Activated CD4-positive, alpha-beta T cell treated with anti-CD3 and anti-CD28 coated beads for 36 hours (primary cell): ENCODE measurements at regions of chr13 and their contacts with region 1.

Region 1: DNA sequence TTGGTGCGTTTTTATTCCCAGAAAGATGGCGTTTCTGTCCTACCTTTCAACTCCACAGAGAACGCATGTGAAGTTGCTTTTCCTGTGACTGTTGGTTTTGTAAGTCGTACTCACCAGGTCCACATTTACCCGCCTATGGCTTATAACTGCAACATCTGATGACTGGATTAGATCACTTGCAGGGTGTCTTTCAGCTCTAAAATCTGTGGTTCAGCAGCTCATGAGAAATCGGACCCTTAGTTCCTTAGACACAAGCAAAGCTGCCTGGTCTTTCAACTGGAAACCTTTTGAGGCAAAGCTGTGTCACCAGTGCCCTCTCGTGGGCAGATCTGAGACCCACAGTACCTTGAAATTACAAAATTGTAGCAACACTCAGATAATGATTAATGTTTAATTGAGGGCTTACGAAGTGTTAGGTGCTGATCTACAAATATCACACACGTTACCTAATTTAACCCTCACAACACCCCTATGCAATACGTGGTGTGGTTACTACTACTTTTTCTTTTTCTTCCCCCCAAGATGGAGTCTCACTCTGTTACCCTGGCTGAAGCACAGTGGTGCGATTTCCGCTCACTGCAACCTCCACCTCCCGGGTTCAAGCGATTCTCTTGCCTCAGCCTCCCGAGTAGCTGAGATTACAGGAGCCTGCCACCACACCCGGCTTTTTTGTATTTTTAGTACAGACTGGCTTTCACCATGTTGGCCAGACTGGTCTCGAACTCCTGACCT is 65.4 kb downstream of the RUBCNL start:
- DNase-seq: peak; percentile 87
- ATAC-seq: peak; percentile 87
- H3K4me3 Mint-ChIP-seq: peak overlapping the region; percentile 77
- H3K27ac Mint-ChIP-seq: peak overlapping the region; percentile 94
- H3K4me1 Mint-ChIP-seq: peaks cover 37% of the 10 kb centered on the region
- H3K27me3 Mint-ChIP-seq: no peaks in the 10 kb centered on the region

Region 2: DNA sequence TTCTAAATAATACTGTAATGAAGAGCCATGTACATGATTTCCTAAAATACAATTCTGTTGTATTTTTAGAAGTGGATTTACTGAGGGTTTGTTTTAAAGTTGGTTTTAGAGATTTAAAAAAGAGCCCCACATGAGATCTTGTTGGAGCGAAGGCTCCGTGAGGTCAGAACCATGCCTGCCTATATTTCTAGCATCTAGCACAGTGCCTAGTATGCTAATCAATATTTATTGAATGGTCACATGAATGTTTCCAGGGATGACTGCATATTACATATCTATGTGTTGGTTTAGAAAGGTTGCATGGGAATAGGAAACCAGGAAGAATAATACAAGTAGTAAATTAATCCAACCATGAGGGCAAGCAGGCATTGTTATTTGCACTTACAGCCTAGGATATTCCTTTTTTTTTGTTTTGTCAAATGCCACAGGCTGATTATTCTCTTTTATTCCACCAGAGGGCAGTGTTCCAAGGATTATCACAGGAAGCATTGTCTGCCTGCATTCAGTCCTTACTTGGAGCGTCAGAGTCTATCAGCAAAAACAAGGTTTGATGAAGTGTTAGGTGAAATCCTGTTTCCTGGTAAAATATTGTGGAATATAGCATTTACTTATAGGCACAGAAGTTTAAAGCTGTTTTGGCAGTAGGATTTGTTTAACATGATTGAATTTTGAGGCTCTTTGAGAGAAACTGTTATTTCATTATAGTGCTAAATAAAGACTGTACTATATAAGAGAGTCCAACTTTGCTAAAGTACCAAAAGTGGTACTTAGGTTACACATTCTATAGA is 810.2 kb before region 1 on chr13:
- CTCF ChIA-PET with region 1: interaction called, 3 read pairs
- POLR2A ChIA-PET with region 1: no interaction called
- intact Hi-C with region 1: loop called (anchors 1 to 2 kb)
- DNase-seq: peak; percentile 25
- ATAC-seq: peak; percentile 89
- H3K4me3 Mint-ChIP-seq: no peak overlapping the region
- H3K27ac Mint-ChIP-seq: peak overlapping the region; percentile 66
- H3K4me1 Mint-ChIP-seq: peaks cover 14% of the 10 kb centered on the region
- H3K27me3 Mint-ChIP-seq: no peaks in the 10 kb centered on the region

Region 3: DNA sequence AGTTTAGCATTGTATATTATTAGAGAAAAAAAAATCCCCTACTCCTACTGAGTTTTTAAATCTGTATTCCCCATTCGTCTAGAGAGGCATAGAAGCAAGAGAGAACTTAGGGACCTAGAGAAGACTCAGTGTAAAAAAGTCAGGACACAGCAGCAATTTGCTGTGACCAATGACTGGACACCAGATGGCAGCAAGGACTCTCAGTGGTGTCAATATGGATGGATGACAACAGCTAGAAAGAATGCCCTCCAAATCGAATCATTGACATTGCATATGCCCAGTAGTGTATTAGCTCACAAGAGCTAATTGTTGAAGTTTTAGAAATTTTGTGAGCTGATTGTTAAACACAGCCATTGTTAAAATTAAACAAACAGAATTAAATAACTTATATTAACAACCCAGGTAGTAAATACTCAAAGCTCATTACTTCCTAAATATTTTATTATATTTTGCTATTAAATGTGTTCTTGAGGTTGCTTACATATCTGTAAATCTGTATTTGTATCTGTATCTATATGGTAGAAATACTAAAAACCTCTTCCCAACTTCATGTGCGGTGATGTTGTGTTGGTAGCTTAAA is 514.0 kb before region 1 on chr13:
- CTCF ChIA-PET with region 1: no interaction called
- POLR2A ChIA-PET with region 1: no interaction called
- intact Hi-C with region 1: loop called in 1 of 2 experiments (anchors 1 kb)
- DNase-seq: peak; percentile 43
- ATAC-seq: no peak
- H3K4me3 Mint-ChIP-seq: no peak overlapping the region
- H3K27ac Mint-ChIP-seq: no peak overlapping the region
- H3K4me1 Mint-ChIP-seq: peaks cover 4% of the 10 kb centered on the region
- H3K27me3 Mint-ChIP-seq: no peaks in the 10 kb centered on the region

Region 4: GRCh38 chr13:46160471-46161066 is 161.1 kb before region 1 on chr13:
- CTCF ChIA-PET with region 1: interaction called, 18 read pairs
- POLR2A ChIA-PET with region 1: no interaction called
- intact Hi-C with region 1: loop called (anchors 2 kb)
- DNase-seq: no peak
- ATAC-seq: peak; percentile 52
- H3K4me3 Mint-ChIP-seq: peak overlapping the region; percentile 53
- H3K27ac Mint-ChIP-seq: peak overlapping the region; percentile 91
- H3K4me1 Mint-ChIP-seq: peaks cover 69% of the 10 kb centered on the region
- H3K27me3 Mint-ChIP-seq: no peaks in the 10 kb centered on the region

Region 5: GRCh38 chr13:46211483-46212351 is 109.9 kb before region 1 on chr13 and contains the start of gene LRRC63:
- CTCF ChIA-PET with region 1: interaction called, 4 read pairs
- POLR2A ChIA-PET with region 1: no interaction called
- intact Hi-C with region 1: loop called in 1 of 2 experiments (anchors 5 kb)
- DNase-seq: peak; percentile 90
- ATAC-seq: peak; percentile 96
- H3K4me3 Mint-ChIP-seq: peak within 1 kb of the TSS; percentile 76
- H3K27ac Mint-ChIP-seq: peak within 1 kb of the TSS; percentile 88
- H3K4me1 Mint-ChIP-seq: peaks cover 23% of the 10 kb centered on the region
- H3K27me3 Mint-ChIP-seq: no peaks in the 10 kb centered on the region
- total RNA-seq, gene LRRC63: 0.50 to 0.67 TPM

Region 6: DNA sequence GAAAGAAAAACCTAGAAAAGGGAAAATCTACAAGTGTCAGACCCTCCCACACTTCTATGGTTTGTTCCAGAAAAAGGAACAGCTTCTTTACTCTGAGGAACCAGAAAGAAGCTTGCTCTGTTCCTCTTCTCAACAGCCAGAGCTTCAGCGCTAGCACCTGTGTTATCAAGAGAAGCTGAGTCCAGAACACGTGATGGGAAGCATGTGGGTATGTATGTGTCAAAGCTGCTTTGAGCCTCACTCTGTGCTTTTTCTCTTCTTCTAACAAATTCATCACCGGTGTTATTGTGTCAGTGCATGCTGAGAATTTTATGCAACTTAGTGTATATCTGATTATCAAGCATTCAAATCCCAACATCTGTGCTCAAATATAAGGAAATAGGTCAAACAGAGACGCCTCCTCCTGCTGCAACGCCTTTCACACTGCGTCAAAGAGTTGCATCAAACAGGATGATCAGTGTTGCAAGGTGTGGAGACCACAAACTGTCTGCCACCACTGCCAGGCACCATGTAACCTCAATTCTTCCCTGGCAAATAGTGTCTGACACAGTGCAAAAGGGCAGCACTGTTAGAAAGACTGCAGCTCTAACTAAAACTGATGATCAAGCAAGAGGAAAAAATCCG is 26.1 kb before region 1 on chr13:
- CTCF ChIA-PET with region 1: interaction called, 35 read pairs
- POLR2A ChIA-PET with region 1: interaction called, 6 read pairs
- intact Hi-C with region 1: loop called (anchors 1 kb)
- DNase-seq: peak; percentile 75
- ATAC-seq: peak; percentile 88
- H3K4me3 Mint-ChIP-seq: peak overlapping the region; percentile 44
- H3K27ac Mint-ChIP-seq: peak overlapping the region; percentile 95
- H3K4me1 Mint-ChIP-seq: peaks cover 60% of the 10 kb centered on the region
- H3K27me3 Mint-ChIP-seq: no peaks in the 10 kb centered on the region

Region 7: DNA sequence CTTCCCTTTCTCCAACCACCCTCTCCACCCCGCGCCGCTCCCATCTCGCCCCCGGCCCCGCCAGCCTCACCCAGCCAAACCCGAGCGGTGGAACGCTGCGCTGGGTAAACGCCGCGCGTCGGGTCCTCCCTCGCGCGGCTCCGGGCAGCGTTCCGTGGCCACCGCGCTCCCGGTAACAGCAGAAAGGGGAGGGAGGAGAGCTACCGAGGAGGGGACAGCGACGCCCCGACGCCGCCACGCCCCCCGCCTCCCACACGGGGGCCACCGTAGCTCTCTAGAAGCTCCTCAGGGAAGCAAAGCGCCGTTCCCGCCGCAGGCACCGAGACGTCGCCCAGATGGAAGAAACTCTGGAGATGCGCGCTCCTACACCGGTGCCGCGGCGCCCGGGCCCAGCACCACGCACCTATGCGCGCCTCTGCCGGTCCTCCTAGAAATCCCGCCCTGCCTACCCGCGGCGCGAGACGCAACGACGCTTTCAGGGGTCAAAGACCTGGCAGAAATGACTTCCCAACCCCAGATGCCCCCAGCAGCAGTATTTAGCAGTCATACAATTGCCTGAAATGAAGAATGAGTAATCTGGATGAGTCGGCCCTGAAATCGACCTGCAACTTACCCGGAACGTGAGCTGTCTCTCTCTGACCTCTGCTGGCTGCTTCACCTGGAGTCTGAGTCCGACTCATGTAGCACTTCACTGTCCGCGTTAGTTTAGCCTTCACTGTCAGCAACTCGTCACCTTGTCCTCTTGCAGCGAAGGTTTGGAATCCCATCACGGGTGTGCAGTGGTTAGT is 65.6 kb after region 1 on chr13 and contains the start of gene RUBCNL:
- CTCF ChIA-PET with region 1: interaction called, 5 read pairs
- POLR2A ChIA-PET with region 1: no interaction called
- intact Hi-C with region 1: loop called in 1 of 2 experiments (anchors 1 kb)
- DNase-seq: peak; percentile 67
- ATAC-seq: peak; percentile 83
- H3K4me3 Mint-ChIP-seq: peak within 1 kb of the TSS; percentile 74
- H3K27ac Mint-ChIP-seq: peak within 1 kb of the TSS; percentile 34
- H3K4me1 Mint-ChIP-seq: peaks cover 22% of the 10 kb centered on the region
- H3K27me3 Mint-ChIP-seq: peaks cover 35% of the 10 kb centered on the region
- total RNA-seq, gene RUBCNL: 1.0 to 1.1 TPM